T-cell (primary cell): ENCODE measurements at regions of chr11 and their contacts with region 1.

Region 1: DNA sequence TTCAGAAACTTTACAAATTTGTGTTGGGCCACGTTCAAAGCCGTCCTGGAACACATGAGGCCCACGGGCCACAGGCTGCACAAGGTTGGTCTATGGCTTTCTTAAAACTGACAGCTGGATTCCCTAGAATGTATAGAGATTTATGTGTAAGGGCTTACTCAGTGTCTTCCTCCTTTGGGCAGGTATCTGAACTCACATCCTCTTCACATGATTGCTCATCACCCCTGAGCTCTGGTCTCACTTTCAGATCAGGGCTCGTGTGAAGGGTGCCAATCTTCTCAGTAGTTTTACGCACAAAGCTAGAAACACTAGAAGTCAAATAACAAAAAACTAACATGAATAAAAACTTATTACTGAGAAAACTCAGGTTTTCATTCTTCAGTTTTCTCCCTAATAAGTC is 27.1 kb downstream of the HPS5 start:
- DNase-seq: no peak
- ATAC-seq: no peak
- H3K4me3 ChIP-seq: no peak overlapping the region
- H3K4me3 Mint-ChIP-seq: no peak overlapping the region
- H3K27ac ChIP-seq: no peak overlapping the region
- H3K27ac Mint-ChIP-seq: no peak overlapping the region
- H3K4me1 ChIP-seq: no peaks in the 10 kb centered on the region
- H3K4me1 Mint-ChIP-seq: no peaks in the 10 kb centered on the region
- H3K27me3 ChIP-seq: no peaks in the 10 kb centered on the region
- H3K27me3 Mint-ChIP-seq: no peaks in the 10 kb centered on the region

Region 2: DNA sequence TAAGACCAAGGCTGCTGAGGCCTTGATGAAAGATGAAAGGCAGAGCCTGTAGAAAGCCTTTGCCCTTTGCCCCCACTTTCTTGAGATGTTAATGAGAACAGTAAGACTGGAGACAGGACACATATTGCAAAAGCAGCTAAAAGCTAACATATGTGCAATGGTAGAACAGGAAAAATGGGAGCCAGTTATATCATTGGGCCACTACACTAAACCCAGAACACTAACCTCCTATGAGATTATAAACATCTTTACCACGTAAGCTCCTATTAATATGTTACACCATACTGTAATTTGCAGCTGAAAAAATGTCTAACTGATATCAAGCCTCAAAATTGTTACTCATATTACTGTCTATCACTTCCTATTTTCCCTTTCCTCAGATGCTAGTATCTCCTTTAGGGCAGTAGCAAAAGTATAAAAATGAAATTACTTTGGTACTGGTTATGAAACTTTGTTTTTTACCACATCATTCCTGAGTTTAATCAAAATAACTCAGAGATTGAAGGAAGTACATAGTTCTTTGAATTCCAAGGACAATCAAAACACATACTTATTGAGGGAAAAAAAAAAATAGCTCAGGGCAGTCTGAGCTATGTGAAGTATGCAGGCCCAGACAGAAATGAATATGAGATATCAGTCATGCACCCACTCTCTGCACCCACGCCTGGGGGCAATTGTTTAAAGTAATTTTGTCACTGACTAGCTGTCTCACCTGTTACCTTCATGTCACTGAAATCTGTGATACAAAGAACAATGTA is 18.0 kb after region 1 on chr11:
- CTCF ChIA-PET with region 1: interaction called in 1 of 2 experiments, 3 read pairs
- POLR2A ChIA-PET with region 1: interaction called in 1 of 2 experiments, 10 read pairs
- DNase-seq: no peak
- ATAC-seq: no peak
- H3K4me3 ChIP-seq: no peak overlapping the region
- H3K4me3 Mint-ChIP-seq: no peak overlapping the region
- H3K27ac ChIP-seq: no peak overlapping the region
- H3K27ac Mint-ChIP-seq: no peak overlapping the region
- H3K4me1 ChIP-seq: no peaks in the 10 kb centered on the region
- H3K4me1 Mint-ChIP-seq: peaks cover 0 to 8% (median 3%) of the 10 kb centered on the region in 3 donors
- H3K27me3 ChIP-seq: no peaks in the 10 kb centered on the region
- H3K27me3 Mint-ChIP-seq: no peaks in the 10 kb centered on the region

Region 3: DNA sequence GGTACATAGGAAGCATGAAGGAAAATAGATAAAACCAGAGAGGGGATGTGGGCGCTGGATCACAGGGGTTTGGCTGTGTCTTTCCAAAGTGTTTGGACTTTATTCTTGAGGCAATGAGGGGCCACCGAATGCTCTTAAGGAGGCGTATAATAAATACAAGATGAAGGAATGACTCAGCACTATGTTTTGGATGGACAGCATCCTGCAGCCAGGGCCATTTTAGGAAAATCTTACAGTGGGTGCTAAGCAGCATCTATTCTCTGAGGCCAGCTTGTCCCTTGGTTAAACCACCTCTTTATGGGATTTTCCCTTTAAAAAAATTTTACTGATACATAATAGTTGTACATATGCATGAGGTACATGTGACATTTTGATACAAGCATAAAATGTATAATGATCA is 95.2 kb after region 1 on chr11:
- CTCF ChIA-PET with region 1: no interaction called
- POLR2A ChIA-PET with region 1: no interaction called
- DNase-seq: no peak
- ATAC-seq: no peak
- H3K4me3 ChIP-seq: no peak overlapping the region
- H3K4me3 Mint-ChIP-seq: no peak overlapping the region
- H3K27ac ChIP-seq: no peak overlapping the region
- H3K27ac Mint-ChIP-seq: no peak overlapping the region
- H3K4me1 ChIP-seq: peaks cover 7 to 46% of the 10 kb centered on the region in 2 experiments
- H3K4me1 Mint-ChIP-seq: peaks cover 17 to 48% (median 23%) of the 10 kb centered on the region in 3 donors
- H3K27me3 ChIP-seq: no peaks in the 10 kb centered on the region
- H3K27me3 Mint-ChIP-seq: no peaks in the 10 kb centered on the region